ENCODE measurements at regions of chr1 and their contacts with region 1.

Region 1: GRCh38 chr1:33633019-33633801 is 160.8 kb downstream of the ZSCAN20 start:
- DNase-seq: peak; percentile 88
- H3K4me3 ChIP-seq: peak overlapping the region in 1 of 2 experiments; percentile 39; a peak in 1 of 4 replicates
- H3K27ac ChIP-seq: no peak overlapping the region
- H3K4me1 ChIP-seq: no peaks in the 10 kb centered on the region; a peak in 1 of 4 replicates
- H3K27me3 ChIP-seq: no peaks in the 10 kb centered on the region
- CTCF ChIP-seq: peak; percentile 95
- EP300 ChIP-seq: no peak
- RAD21 ChIP-seq: peak; percentile 83

Region 2: GRCh38 chr1:33654267-33654834 is 21.1 kb after region 1 on chr1:
- CTCF ChIA-PET with region 1: interaction called, 54 read pairs
- POLR2A ChIA-PET with region 1: no interaction called
- DNase-seq: peak; percentile 42
- H3K4me3 ChIP-seq: no peak overlapping the region
- H3K27ac ChIP-seq: no peak overlapping the region
- H3K4me1 ChIP-seq: no peaks in the 10 kb centered on the region; a peak in 1 of 4 replicates
- H3K27me3 ChIP-seq: no peaks in the 10 kb centered on the region
- CTCF ChIP-seq: no peak
- EP300 ChIP-seq: no peak
- RAD21 ChIP-seq: peak; percentile 55

Region 3: GRCh38 chr1:33683913-33684312 is 50.7 kb after region 1 on chr1:
- CTCF ChIA-PET with region 1: interaction called, 20 read pairs
- POLR2A ChIA-PET with region 1: no interaction called
- DNase-seq: peak; percentile 87
- H3K4me3 ChIP-seq: no peak overlapping the region
- H3K27ac ChIP-seq: peak overlapping the region in 1 of 2 experiments; percentile 86; a peak in 2 of 4 replicates
- H3K4me1 ChIP-seq: peaks cover 0 to 20% of the 10 kb centered on the region in 2 experiments; a peak in 2 of 4 replicates
- H3K27me3 ChIP-seq: no peaks in the 10 kb centered on the region
- CTCF ChIP-seq: no peak
- EP300 ChIP-seq: peak in 1 of 2 experiments; percentile 86; a peak in 2 of 4 replicates
- RAD21 ChIP-seq: peak; percentile 81

Region 4: GRCh38 chr1:33719771-33720670 is 86.8 kb after region 1 on chr1:
- CTCF ChIA-PET with region 1: interaction called, 14 read pairs
- POLR2A ChIA-PET with region 1: no interaction called
- DNase-seq: no peak
- H3K4me3 ChIP-seq: no peak overlapping the region
- H3K27ac ChIP-seq: no peak overlapping the region
- H3K4me1 ChIP-seq: peaks cover 0 to 4% of the 10 kb centered on the region in 2 experiments; a peak in 1 of 4 replicates
- H3K27me3 ChIP-seq: no peaks in the 10 kb centered on the region
- CTCF ChIP-seq: no peak
- EP300 ChIP-seq: no peak
- RAD21 ChIP-seq: no peak

Region 5: GRCh38 chr1:34113887-34114286 is 480.7 kb after region 1 on chr1:
- CTCF ChIA-PET with region 1: interaction called, 12 read pairs
- POLR2A ChIA-PET with region 1: no interaction called
- DNase-seq: peak; percentile 30
- H3K4me3 ChIP-seq: no peak overlapping the region
- H3K27ac ChIP-seq: no peak overlapping the region
- H3K4me1 ChIP-seq: no peaks in the 10 kb centered on the region
- H3K27me3 ChIP-seq: no peaks in the 10 kb centered on the region
- CTCF ChIP-seq: no peak
- EP300 ChIP-seq: no peak
- RAD21 ChIP-seq: peak; percentile 45; the same call in 1 of the 2 replicates

Region 6: GRCh38 chr1:34597877-34598514 is 964.8 kb after region 1 on chr1:
- CTCF ChIA-PET with region 1: interaction called, 78 read pairs
- POLR2A ChIA-PET with region 1: no interaction called
- DNase-seq: peak; percentile 75
- H3K4me3 ChIP-seq: peak overlapping the region in 1 of 2 experiments; percentile 52; a peak in 1 of 4 replicates
- H3K27ac ChIP-seq: no peak overlapping the region
- H3K4me1 ChIP-seq: no peaks in the 10 kb centered on the region
- H3K27me3 ChIP-seq: no peaks in the 10 kb centered on the region
- CTCF ChIP-seq: peak; percentile 32
- EP300 ChIP-seq: no peak
- RAD21 ChIP-seq: peak; percentile 91

Measured in SK-N-SH (cell line).